CD4-positive, alpha-beta memory T cell (primary cell): ENCODE measurements at regions of chr12 and their contacts with region 1.

Region 1: DNA sequence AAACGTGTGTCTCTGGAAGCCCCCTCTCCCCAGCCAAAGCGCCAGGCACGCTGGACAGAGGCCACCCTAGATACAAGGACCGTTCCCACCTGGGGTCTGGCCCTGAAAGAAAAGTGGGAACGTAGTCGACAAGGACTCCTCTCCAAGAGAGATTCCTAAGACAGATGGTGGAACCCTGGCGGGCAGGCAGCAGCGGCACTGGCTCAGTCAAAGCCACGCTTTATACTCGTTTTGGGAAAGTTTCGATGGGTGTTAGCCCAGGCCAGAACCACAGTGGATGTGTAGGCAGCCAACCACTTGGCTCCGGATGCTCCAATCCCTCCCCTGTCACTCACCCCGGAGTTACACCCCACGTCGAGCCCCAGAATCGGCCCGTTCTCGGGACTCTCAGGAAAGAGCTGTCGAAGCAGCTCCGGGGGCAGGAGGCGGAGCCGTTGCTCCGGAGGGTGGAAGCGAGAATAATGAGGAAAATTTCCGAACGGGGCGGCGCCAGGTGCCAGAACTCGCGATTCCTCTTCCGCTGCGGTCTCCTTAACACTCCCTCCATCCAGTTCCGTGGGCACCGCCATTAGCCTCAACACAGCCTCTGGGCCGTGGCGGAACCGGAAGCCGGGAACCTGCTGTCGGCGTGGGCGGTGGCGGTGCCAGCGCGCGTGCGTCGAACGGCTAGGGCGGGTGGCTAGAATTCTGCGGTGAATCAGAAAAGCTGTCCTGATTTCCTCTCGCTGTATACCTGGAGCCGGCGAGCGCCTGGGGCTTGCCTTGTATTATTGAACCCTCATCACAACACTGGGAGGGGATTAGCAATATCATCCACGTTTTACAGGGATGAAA is at the start of gene BCDIN3D:
- DNase-seq: peak; percentile 90 to 93 (median 91)
- H3K4me3 ChIP-seq: peak within 1 kb of the TSS; percentile 84 to 90
- H3K4me3 Mint-ChIP-seq: peak within 1 kb of the TSS; percentile 91 to 97 (median 94)
- H3K27ac ChIP-seq: peak within 1 kb of the TSS; percentile 76
- H3K27ac Mint-ChIP-seq: peak within 1 kb of the TSS; percentile 86 to 97 (median 95)
- H3K4me1 ChIP-seq: peaks cover 31% of the 10 kb centered on the region
- H3K4me1 Mint-ChIP-seq: peaks cover 23 to 48% (median 39%) of the 10 kb centered on the region in 4 donors
- H3K27me3 ChIP-seq: no peaks in the 10 kb centered on the region
- H3K27me3 Mint-ChIP-seq: no peaks in the 10 kb centered on the region
- total RNA-seq, gene BCDIN3D: 16.0 to 17.5 TPM

Region 2: DNA sequence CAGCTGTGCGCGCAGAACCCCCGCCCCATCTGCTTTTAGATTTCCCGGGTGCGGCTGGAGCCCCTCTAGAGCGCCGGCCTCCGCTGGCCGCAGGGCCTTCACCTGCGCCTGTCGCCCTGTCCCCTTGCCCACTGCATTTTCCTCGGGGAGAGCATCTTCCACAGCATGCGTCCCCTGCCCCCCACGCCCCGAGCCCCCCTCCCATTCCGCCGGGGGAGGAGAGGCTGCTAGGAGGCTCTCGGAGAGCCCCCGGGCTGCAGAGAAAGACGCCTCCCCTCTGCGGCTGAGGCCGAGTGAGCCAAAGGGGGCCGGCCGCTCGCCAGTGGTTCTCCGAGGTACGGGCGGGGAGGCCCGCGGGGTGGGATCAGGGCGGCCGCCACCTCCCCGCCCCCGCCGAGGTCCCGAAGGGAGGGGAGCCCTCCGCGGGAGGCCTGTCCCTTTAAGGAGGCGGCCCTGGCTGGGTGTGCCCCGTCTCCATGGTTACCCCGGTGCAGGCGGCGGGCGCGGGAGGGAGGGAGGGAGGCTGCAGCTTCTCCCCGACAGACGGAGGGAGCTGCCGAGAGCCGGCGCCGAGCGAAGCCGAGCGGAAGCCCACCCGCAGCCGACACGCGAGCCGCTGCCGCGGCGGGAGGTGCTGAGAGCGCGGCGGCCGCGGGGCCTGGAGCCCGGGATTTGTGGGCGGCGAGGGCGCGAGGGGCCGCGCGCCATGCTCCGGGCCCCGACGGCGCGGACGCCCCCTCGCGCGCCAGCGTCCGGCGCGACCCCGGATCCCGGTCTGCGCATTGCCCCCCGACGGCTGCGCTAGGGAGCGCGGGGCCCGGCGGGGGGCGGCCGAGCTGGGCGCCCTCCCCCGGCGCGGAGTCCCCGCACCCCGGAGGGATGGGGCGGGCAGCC is 304.0 kb before region 1 on chr12 and contains the start of gene KCNH3:
- CTCF ChIA-PET with region 1: no interaction called
- POLR2A ChIA-PET with region 1: no interaction called
- intact Hi-C with region 1: loop called (anchors 2 kb)
- DNase-seq: peak; percentile 86 to 95 (median 88)
- H3K4me3 ChIP-seq: peak within 1 kb of the TSS; percentile 62 to 69
- H3K4me3 Mint-ChIP-seq: peak within 1 kb of the TSS; percentile 73 to 85 (median 79)
- H3K27ac ChIP-seq: no peak within 1 kb of the TSS
- H3K27ac Mint-ChIP-seq: peak within 1 kb of the TSS in 6 of 7 donors; percentile 46 to 70 (median 66)
- H3K4me1 ChIP-seq: peaks cover 21% of the 10 kb centered on the region
- H3K4me1 Mint-ChIP-seq: peaks cover 8 to 38% (median 19%) of the 10 kb centered on the region in 4 donors
- H3K27me3 ChIP-seq: no peaks in the 10 kb centered on the region
- H3K27me3 Mint-ChIP-seq: peaks cover 0 to 5% of the 10 kb centered on the region in 2 donors
- total RNA-seq, gene KCNH3: 1.3 to 2.4 TPM

Region 3: DNA sequence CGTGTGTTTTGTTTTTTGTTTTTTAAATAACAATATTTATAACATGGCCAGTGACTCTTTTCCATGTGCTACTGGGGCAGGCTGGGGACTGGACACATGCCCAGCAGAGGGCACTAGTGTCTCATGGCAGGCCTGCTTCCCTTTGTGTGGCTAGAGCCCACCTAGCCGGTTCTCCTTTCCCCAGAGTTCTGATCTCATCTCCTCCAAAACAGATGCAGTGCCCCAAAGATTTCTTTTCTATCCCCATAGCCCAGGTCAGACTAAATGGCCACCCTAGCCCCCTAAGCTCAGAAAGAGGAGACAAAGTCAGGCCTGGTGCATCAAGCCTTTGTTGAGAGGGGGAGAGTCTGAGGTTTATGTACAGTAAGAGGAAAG is 198.1 kb before region 1 on chr12:
- CTCF ChIA-PET with region 1: interaction called, 5 read pairs
- POLR2A ChIA-PET with region 1: interaction called, 3 read pairs
- intact Hi-C with region 1: loop called (anchors 2 kb)
- DNase-seq: peak; percentile 79 to 85 (median 80)
- H3K4me3 ChIP-seq: no peak overlapping the region
- H3K4me3 Mint-ChIP-seq: peak overlapping the region in 3 of 8 donors; percentile 36 to 43 (median 37)
- H3K27ac ChIP-seq: peak overlapping the region; percentile 42
- H3K27ac Mint-ChIP-seq: peak overlapping the region; percentile 76 to 96 (median 93)
- H3K4me1 ChIP-seq: peaks cover 18% of the 10 kb centered on the region
- H3K4me1 Mint-ChIP-seq: peaks cover 13 to 35% (median 22%) of the 10 kb centered on the region in 4 donors
- H3K27me3 ChIP-seq: no peaks in the 10 kb centered on the region
- H3K27me3 Mint-ChIP-seq: no peaks in the 10 kb centered on the region

Region 4: DNA sequence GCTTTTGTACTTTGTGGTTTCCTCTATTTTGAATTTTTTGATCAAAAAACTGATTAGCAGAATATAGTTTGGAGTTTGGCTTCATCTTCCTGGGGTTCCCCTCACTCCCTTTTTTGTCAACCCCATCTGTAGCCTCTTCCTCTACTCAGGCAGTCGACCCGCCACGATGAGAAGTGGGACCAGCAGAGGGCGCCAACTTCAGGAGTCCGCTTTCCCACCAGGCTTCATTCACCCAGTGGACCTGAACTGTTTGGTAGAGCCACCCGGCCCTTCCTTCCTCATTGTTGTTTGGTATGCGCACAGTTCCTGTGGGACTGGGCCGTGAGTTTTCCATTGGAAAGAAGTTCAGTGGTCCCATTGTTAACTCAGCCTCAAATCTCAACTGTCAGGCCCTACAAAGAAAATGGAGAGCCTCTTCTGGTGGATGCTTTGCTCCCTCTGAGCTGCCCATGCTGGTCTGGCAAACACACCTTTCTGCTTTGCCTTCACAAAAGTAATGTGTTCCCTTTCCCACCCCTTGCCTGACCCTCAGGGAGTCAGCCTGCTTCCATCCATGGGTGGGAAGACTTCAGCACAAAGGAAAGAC is 79.6 kb before region 1 on chr12:
- CTCF ChIA-PET with region 1: interaction called, 53 read pairs
- POLR2A ChIA-PET with region 1: interaction called, 11 read pairs
- intact Hi-C with region 1: loop called (anchors 1 kb)
- DNase-seq: peak; percentile 74 to 86 (median 76)
- H3K4me3 ChIP-seq: no peak overlapping the region
- H3K4me3 Mint-ChIP-seq: peak overlapping the region in 7 of 8 donors; percentile 7 to 74 (median 49)
- H3K27ac ChIP-seq: peak overlapping the region; percentile 56
- H3K27ac Mint-ChIP-seq: peak overlapping the region; percentile 69 to 95 (median 86)
- H3K4me1 ChIP-seq: peaks cover 61% of the 10 kb centered on the region
- H3K4me1 Mint-ChIP-seq: peaks cover 50 to 64% (median 57%) of the 10 kb centered on the region in 4 donors
- H3K27me3 ChIP-seq: no peaks in the 10 kb centered on the region
- H3K27me3 Mint-ChIP-seq: no peaks in the 10 kb centered on the region

Region 5: DNA sequence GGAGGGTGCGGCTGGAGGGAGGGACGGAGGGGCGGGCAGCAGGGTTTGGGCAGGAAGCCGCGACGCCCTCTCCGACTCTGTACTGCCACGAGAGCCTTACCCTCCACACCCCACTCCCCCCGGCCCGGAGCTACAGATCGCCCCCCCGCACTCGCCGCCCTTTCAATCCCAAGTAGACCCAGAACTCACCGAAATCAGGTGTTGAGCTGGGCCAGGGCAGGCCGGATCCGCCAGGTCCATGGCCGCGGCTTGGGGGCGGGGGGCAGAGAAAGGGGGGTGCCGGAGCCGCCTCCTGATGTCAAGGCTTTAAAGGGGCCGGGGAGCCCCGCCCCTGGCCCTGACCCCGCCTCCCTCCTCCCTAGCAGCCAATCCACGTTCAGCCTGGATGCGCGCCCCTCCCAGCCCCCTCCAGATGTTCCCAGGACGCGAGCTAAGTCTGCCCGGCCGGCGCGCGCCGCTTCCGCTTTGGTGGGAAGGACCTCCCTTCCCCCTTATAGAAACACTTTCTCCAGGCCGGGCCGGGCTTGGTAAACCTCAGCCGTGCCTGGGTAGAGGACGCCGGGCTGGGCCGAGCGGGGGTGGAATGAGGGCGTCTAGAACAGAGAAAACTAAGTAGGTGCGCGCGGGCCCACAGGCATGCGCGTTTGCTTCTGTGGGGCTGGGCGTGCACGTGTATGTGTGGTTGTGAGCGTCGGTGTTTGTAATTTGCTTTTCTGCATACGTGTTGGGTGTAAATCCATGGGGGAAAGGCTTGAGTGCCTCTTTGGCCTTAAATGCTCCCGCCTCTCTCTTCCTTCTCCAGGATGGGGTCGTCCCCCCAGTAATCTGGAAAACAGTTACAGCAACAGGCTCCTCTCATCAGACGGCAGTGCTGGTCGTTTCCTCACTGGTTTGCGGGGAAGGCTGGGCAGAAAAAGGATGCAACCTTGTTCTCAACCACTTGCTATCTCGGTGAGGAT is 14.3 kb before region 1 on chr12 and contains the start of gene NCKAP5L:
- CTCF ChIA-PET with region 1: interaction called, 10 read pairs
- POLR2A ChIA-PET with region 1: interaction called, 67 read pairs
- intact Hi-C with region 1: loop called (anchors 1 kb)
- DNase-seq: peak; percentile 91 to 96 (median 93)
- H3K4me3 ChIP-seq: peak within 1 kb of the TSS; percentile 70 to 79
- H3K4me3 Mint-ChIP-seq: peak within 1 kb of the TSS; percentile 91 to 99 (median 97)
- H3K27ac ChIP-seq: peak within 1 kb of the TSS; percentile 41
- H3K27ac Mint-ChIP-seq: peak within 1 kb of the TSS; percentile 84 to 98 (median 97)
- H3K4me1 ChIP-seq: peaks cover 24% of the 10 kb centered on the region
- H3K4me1 Mint-ChIP-seq: peaks cover 17 to 34% (median 24%) of the 10 kb centered on the region in 4 donors
- H3K27me3 ChIP-seq: no peaks in the 10 kb centered on the region
- H3K27me3 Mint-ChIP-seq: no peaks in the 10 kb centered on the region
- total RNA-seq, gene NCKAP5L: 10.4 to 11.2 TPM

Region 6: DNA sequence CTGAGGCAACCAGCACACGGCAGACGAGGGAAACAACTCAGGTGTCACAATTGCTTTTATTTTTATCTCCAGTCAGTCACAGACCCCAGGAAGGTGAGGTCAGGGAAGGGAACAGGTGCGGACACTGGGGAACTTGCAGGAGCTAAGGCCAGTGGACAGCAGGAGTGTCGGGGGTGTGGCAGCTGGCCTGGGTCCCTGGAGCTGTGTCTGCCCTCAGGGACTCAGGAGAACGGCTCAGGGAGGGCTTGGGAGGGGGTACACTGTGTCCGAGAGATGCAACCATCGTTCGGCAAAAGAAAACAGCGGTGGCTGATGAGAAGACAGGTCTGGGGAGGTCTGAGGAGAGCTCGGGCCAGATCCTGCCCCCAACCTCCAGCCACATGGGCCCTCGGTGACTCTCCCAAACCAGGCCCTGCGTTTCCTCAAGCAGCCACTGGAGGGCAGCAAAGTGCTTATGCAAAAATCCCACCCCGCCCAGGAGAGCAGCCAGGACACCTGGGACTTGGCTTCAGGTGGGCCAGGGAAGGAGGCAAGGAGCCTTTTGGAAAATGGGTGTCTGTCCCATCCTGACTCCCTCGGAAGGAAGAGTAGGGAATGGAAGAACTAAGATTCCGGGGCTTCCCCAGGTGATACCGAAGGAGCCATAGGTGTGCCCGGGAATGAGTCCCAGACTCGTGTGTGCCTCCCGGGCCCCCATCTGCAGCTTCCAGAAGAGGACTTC is 24.3 kb after region 1 on chr12:
- CTCF ChIA-PET with region 1: interaction called, 13 read pairs
- POLR2A ChIA-PET with region 1: interaction called, 4 read pairs
- intact Hi-C with region 1: no loop called
- DNase-seq: peak; percentile 65 to 73 (median 67)
- H3K4me3 ChIP-seq: no peak overlapping the region
- H3K4me3 Mint-ChIP-seq: no peak overlapping the region
- H3K27ac ChIP-seq: no peak overlapping the region
- H3K27ac Mint-ChIP-seq: no peak overlapping the region
- H3K4me1 ChIP-seq: no peaks in the 10 kb centered on the region
- H3K4me1 Mint-ChIP-seq: no peaks in the 10 kb centered on the region
- H3K27me3 ChIP-seq: no peaks in the 10 kb centered on the region
- H3K27me3 Mint-ChIP-seq: peaks cover 2 to 4% of the 10 kb centered on the region in 2 donors

Region 7: GRCh38 chr12:51536159-51536558 is 1693.4 kb after region 1 on chr12:
- CTCF ChIA-PET with region 1: no interaction called
- POLR2A ChIA-PET with region 1: no interaction called
- intact Hi-C with region 1: no loop called
- DNase-seq: no peak
- H3K4me3 ChIP-seq: no peak overlapping the region
- H3K4me3 Mint-ChIP-seq: no peak overlapping the region
- H3K27ac ChIP-seq: no peak overlapping the region
- H3K27ac Mint-ChIP-seq: no peak overlapping the region
- H3K4me1 ChIP-seq: no peaks in the 10 kb centered on the region
- H3K4me1 Mint-ChIP-seq: peaks cover 3 to 8% (median 6%) of the 10 kb centered on the region in 4 donors
- H3K27me3 ChIP-seq: no peaks in the 10 kb centered on the region
- H3K27me3 Mint-ChIP-seq: peaks cover 8 to 13% of the 10 kb centered on the region in 2 donors